Psoas muscle (tissue), 8 donors: ENCODE measurements at regions of chr3 and their contacts with region 1.

Region 1: DNA sequence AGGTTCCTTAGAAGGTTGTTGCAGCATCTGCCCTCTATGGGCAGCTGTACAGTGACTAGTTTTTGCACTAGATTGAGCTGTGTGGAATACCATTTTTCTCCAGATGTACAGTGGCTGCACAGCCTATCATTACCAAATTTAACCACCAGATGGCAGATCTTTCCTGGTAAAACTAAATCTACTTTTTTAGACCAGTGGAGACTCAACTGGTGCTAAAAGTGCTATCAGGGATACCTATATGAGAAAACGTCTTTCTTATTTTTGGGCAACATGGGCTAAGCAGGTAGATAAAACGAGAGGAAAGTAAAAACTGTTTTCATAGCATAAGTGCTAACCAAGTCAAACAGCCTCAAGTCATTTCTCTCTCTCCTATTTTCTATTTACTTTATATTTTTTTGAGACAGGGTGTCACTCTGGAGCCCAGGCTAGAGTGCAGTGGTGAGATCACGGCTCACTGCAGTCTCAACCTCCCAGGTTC is 21.2 kb downstream of the IGSF10 start:
- DNase-seq: no peak
- ATAC-seq: peak in 3 of 4 donors; percentile 55 to 72 (median 65)
- H3K4me3 ChIP-seq: no peak overlapping the region
- H3K27ac ChIP-seq: no peak overlapping the region
- H3K4me1 ChIP-seq: no peaks in the 10 kb centered on the region
- H3K27me3 ChIP-seq: no peaks in the 10 kb centered on the region
- CTCF ChIP-seq: peak; percentile 85

Region 2: GRCh38 chr3:150861851-150862250 is 577.8 kb before region 1 on chr3:
- intact Hi-C with region 1: no loop called
- DNase-seq: no peak
- ATAC-seq: no peak
- H3K4me3 ChIP-seq: no peak overlapping the region
- H3K27ac ChIP-seq: no peak overlapping the region
- H3K4me1 ChIP-seq: no peaks in the 10 kb centered on the region
- H3K27me3 ChIP-seq: no peaks in the 10 kb centered on the region
- CTCF ChIP-seq: no peak

Region 3: GRCh38 chr3:151259664-151260063 is 180.0 kb before region 1 on chr3:
- intact Hi-C with region 1: no loop called
- DNase-seq: no peak
- ATAC-seq: no peak
- H3K4me3 ChIP-seq: no peak overlapping the region
- H3K27ac ChIP-seq: no peak overlapping the region
- H3K4me1 ChIP-seq: no peaks in the 10 kb centered on the region
- H3K27me3 ChIP-seq: no peaks in the 10 kb centered on the region
- CTCF ChIP-seq: no peak

Region 4: GRCh38 chr3:151568184-151568583 is 128.5 kb after region 1 on chr3:
- intact Hi-C with region 1: no loop called
- DNase-seq: no peak
- ATAC-seq: no peak
- H3K4me3 ChIP-seq: no peak overlapping the region
- H3K27ac ChIP-seq: no peak overlapping the region
- H3K4me1 ChIP-seq: no peaks in the 10 kb centered on the region
- H3K27me3 ChIP-seq: no peaks in the 10 kb centered on the region
- CTCF ChIP-seq: no peak

Region 5: DNA sequence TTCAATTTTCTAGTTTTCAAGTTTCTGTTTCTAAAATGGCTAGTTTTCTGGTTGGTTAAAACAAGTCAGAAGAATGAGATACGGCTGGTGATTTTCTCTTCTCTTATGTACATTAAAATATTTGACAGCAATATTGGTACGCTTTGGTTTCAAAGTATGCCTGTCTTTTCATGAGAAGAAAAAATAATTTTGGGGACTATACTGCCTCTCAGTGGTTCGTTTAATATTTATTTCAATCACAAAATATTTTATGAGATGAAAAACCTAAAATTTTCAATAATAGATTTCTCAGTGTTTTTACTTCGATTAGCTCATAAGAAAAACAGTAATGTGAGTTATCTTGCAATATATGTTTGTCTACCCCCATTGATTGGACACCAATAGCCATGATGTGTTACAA is 221.2 kb after region 1 on chr3:
- intact Hi-C with region 1: loop called in 1 of 2 experiments (anchors 5 kb)
- DNase-seq: no peak
- ATAC-seq: no peak
- H3K4me3 ChIP-seq: no peak overlapping the region
- H3K27ac ChIP-seq: no peak overlapping the region
- H3K4me1 ChIP-seq: no peaks in the 10 kb centered on the region
- H3K27me3 ChIP-seq: no peaks in the 10 kb centered on the region
- CTCF ChIP-seq: peak; percentile 41

Region 6: GRCh38 chr3:151838583-151839312 is 399.1 kb after region 1 on chr3:
- intact Hi-C with region 1: loop called (anchors 2 to 5 kb)
- DNase-seq: no peak
- ATAC-seq: peak in 3 of 4 donors; percentile 47 to 87 (median 72)
- H3K4me3 ChIP-seq: peak overlapping the region; percentile 26
- H3K27ac ChIP-seq: no peak overlapping the region
- H3K4me1 ChIP-seq: peaks cover 11% of the 10 kb centered on the region
- H3K27me3 ChIP-seq: no peaks in the 10 kb centered on the region
- CTCF ChIP-seq: peak; percentile 84

Region 7: DNA sequence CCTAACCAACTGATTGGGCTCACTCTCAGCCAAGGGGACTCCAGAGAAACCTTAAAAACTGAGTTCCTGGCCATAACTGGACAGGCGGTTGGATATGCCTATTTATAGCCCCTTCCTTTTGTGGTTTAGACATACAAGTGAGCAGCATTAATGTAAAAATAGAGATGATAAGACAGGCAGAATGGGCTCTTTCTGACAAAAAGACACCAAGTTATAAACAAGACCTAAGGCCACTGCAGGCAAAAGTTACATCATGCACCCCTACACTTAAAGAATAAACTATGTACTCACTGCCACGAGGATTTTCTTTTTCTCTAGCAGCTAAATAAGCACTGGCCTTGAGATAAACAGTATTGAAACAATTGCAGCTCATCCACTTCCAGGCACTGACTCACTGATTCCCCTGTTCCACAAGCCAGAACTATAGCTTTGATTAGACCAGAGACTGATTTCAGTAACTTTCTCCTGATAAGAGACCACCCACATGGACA is 463.9 kb after region 1 on chr3:
- intact Hi-C with region 1: loop called in 1 of 2 experiments (anchors 10 kb)
- DNase-seq: no peak
- ATAC-seq: no peak
- H3K4me3 ChIP-seq: no peak overlapping the region
- H3K27ac ChIP-seq: no peak overlapping the region
- H3K4me1 ChIP-seq: peaks cover 4% of the 10 kb centered on the region
- H3K27me3 ChIP-seq: no peaks in the 10 kb centered on the region
- CTCF ChIP-seq: no peak

Region 8: GRCh38 chr3:151918253-151919029 is 478.8 kb after region 1 on chr3:
- intact Hi-C with region 1: loop called in 1 of 2 experiments (anchors 5 kb)
- DNase-seq: no peak
- ATAC-seq: peak in 1 of 4 donors; percentile 47
- H3K4me3 ChIP-seq: no peak overlapping the region
- H3K27ac ChIP-seq: no peak overlapping the region
- H3K4me1 ChIP-seq: no peaks in the 10 kb centered on the region
- H3K27me3 ChIP-seq: no peaks in the 10 kb centered on the region
- CTCF ChIP-seq: peak; percentile 48